Posterior cingulate gyrus (tissue), 11 donors: ENCODE measurements at regions of chr13 and their contacts with region 1.

Region 1: GRCh38 chr13:80363890-80364503 is 23.1 kb upstream of the SPRY2 start:
- DNase-seq: no peak

Region 2: GRCh38 chr13:79533781-79534400 is 830.1 kb before region 1 on chr13:
- intact Hi-C with region 1: no loop called
- DNase-seq: no peak

Region 3: DNA sequence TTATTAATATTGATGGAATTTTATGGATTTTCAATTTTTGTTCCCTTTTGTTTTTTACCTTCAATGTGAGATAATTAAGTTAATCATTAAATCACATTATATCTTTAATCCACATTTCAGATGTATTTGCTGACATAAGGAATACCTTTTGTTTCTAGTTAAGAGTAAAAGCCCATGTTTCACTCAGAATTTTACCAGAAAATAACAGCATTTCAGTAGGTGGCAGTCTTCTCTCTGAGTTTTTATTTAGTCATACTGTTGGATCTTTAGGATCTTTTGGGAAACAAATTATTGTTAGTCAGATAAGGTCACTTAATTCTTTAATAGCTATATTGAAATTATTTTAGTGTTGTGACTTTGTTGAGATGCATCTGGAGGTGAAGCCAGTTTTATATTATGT is 815.1 kb before region 1 on chr13:
- intact Hi-C with region 1: loop called (anchors 2 kb)
- DNase-seq: no peak

Region 4: DNA sequence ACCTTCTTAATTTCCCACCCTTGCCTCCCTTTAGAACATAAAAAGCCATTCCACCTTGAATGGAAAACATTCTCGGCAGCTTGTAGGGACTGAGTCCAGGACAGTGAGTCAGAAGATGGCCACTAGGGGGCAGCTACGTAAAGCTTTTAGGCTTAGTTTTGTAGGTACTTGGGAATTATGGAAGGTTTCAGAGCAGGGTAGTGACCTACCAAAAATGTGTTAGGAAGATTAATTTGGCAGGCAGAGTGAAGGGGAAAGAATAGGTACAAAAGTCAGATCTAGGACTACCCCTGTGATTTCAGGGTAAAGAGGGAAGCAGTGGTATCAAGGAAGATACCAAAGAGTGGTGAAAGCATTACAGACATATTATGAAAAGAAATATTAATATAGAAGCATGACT is 684.7 kb before region 1 on chr13:
- intact Hi-C with region 1: loop called (anchors 10 kb)
- DNase-seq: peak in 7 of 10 donors; percentile 34 to 75 (median 62)

Region 5: GRCh38 chr13:79775830-79776229 is 588.2 kb before region 1 on chr13:
- intact Hi-C with region 1: loop called (anchors 5 kb)
- DNase-seq: peak in 6 of 10 donors; percentile 15 to 86 (median 37)

Region 6: DNA sequence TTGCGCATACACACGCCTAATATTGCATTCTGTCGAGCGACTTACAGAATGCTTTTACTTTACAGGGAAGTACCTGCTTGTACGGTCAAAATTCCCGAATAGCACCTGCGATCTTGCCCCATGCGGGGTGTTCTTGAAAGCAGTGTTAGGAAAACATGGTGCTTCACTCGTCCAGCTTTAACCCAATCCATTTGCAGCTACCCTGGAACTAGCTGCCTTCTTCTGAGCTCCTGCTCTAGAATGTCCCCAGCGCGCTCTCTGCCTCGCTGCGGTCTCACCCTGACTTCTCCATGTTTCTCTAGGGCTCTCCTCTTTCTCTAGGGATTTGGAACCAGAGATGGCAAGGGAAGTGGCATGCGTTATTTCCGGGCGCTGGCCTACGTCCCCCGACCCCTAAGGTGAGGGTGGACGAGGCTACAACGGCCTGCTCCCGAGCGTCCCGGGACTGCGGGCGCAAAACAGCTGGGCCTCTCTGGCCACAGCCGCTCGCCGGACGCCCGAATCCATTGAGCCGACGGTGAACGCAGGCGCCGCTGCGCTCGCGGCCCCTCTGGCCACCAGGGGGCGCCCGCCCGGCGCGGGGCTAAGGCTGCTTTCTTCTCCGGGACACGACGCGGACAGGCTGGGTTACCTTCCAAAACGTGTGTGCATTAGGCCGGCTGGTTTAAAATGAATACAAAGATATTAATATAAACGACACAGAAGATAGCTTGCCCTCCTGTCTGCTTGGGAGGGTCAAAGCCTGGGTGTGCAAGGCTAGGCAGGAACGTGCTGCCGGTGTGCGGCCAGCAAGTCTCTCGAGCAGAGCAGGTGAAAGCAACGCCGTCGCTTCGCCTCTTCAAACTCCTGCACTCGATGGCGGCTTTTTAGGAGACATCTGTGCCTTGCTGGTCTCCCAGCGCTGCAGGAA is 21.3 kb before region 1 on chr13:
- intact Hi-C with region 1: loop called (anchors 1 kb)
- DNase-seq: peak; percentile 77 to 98 (median 85)